ENCODE measurements at regions of chr10 and their contacts with region 1.

Region 1: DNA sequence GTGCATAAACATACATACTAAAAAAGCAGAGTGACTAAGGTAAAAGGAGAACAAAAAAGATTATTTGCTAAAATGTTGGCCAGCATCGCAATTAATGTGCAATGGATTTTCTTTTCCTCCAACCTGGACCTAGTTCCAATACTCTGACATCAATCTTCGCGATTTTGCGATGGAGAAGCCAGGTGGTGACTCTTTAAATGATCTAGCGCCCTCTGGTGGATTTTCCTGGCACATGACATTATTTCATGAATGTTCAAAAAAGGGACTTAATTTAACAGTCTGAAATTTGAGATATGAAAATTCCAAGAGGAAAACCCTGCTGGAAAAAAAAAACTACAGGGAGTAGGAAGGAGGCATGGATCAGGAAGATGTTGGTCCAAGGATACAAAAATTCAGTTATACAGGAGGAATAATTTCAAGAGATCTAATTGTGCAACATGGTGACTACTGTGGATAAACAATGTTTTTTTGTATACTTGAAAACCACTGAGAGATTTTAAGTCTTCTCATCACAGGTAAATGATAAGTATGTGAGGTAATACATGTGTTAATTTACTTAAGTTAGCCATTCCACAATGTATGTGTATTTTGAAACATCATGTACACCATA is 4.3 kb upstream of the KCNMA1 start:
- DNase-seq: peak; percentile 100
- ATAC-seq: peak; percentile 13
- H3K4me3 ChIP-seq: no peak overlapping the region
- H3K27ac ChIP-seq: peak overlapping the region; percentile 2
- H3K4me1 ChIP-seq: peaks cover 35% of the 10 kb centered on the region
- H3K27me3 ChIP-seq: no peaks in the 10 kb centered on the region
- CTCF ChIP-seq: peak; percentile 100

Region 2: GRCh38 chr10:77173615-77174461 is 468.1 kb before region 1 on chr10:
- CTCF ChIA-PET with region 1: interaction called, 36 read pairs
- POLR2A ChIA-PET with region 1: no interaction called
- intact Hi-C with region 1: loop called (anchors 1 kb)
- DNase-seq: peak; percentile 100
- ATAC-seq: peak; percentile 78
- H3K4me3 ChIP-seq: no peak overlapping the region
- H3K27ac ChIP-seq: no peak overlapping the region
- H3K4me1 ChIP-seq: peaks cover 16% of the 10 kb centered on the region
- H3K27me3 ChIP-seq: no peaks in the 10 kb centered on the region
- CTCF ChIP-seq: peak; percentile 100

Region 3: GRCh38 chr10:77301305-77301730 is 340.6 kb before region 1 on chr10:
- CTCF ChIA-PET with region 1: interaction called, 3 read pairs
- POLR2A ChIA-PET with region 1: interaction called, 3 read pairs
- intact Hi-C with region 1: loop called (anchors 5 kb)
- DNase-seq: peak; percentile 96
- ATAC-seq: 0 out of 2 replicates have a peak, but pooled peaks have one; percentile 1
- H3K4me3 ChIP-seq: no peak overlapping the region
- H3K27ac ChIP-seq: no peak overlapping the region
- H3K4me1 ChIP-seq: peaks cover 34% of the 10 kb centered on the region
- H3K27me3 ChIP-seq: no peaks in the 10 kb centered on the region
- CTCF ChIP-seq: no peak

Region 4: DNA sequence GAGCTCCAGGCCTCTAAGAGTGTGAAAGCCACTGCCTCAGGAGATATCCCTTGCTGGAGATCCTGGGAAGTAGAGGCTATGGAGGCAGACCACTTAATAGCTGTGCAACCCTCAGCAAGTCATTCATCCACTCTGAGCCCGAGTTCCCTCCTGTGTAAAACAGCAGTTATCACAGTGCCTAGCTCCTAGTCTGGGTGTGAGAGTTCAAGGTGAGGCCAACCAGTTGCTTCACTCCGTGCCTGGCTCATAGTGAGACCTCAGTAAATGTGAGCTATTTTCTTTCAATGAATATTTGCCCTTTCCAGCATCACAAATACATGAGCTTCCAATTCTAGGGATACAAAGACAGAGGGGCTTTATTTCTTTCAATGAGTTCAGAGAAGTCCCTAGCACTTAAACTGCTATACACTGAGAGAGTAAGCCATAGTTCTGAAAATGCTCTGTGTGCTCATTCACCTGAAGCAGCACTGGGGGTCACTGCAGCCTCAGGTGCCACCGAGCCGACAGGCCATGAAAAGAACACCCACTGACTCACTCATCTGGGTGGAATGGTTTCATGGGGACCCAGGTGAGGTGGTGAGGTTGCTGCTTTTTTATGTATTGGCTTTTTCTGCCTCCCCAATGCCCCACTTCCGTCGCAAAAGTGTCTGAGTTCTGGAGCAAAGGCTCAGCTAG is 264.1 kb before region 1 on chr10:
- CTCF ChIA-PET with region 1: no interaction called
- POLR2A ChIA-PET with region 1: no interaction called
- intact Hi-C with region 1: no loop called
- DNase-seq: peak; percentile 44
- ATAC-seq: peak; percentile 30; the same call in 1 of the 2 replicates
- H3K4me3 ChIP-seq: no peak overlapping the region
- H3K27ac ChIP-seq: no peak overlapping the region
- H3K4me1 ChIP-seq: peaks cover under 1% of the 10 kb centered on the region; the same call in 1 of the 2 replicates
- H3K27me3 ChIP-seq: no peaks in the 10 kb centered on the region
- CTCF ChIP-seq: peak; percentile 53; the same call in 1 of the 2 replicates

Region 5: GRCh38 chr10:77416311-77417135 is 225.4 kb before region 1 on chr10:
- CTCF ChIA-PET with region 1: no interaction called
- POLR2A ChIA-PET with region 1: no interaction called
- intact Hi-C with region 1: loop called (anchors 1 kb)
- DNase-seq: peak; percentile 100
- ATAC-seq: peak; percentile 94
- H3K4me3 ChIP-seq: peak overlapping the region; percentile 3; the same call in 1 of the 2 replicates
- H3K27ac ChIP-seq: peak overlapping the region; percentile 76
- H3K4me1 ChIP-seq: peaks cover 37% of the 10 kb centered on the region
- H3K27me3 ChIP-seq: no peaks in the 10 kb centered on the region
- CTCF ChIP-seq: no peak

Region 6: GRCh38 chr10:77494327-77494726 is 147.6 kb before region 1 on chr10:
- CTCF ChIA-PET with region 1: interaction called, 4 read pairs
- POLR2A ChIA-PET with region 1: no interaction called
- intact Hi-C with region 1: loop called (anchors 1 kb)
- DNase-seq: peak; percentile 86
- ATAC-seq: peak; percentile 61
- H3K4me3 ChIP-seq: no peak overlapping the region
- H3K27ac ChIP-seq: no peak overlapping the region
- H3K4me1 ChIP-seq: no peaks in the 10 kb centered on the region
- H3K27me3 ChIP-seq: no peaks in the 10 kb centered on the region
- CTCF ChIP-seq: peak; percentile 96

Region 7: DNA sequence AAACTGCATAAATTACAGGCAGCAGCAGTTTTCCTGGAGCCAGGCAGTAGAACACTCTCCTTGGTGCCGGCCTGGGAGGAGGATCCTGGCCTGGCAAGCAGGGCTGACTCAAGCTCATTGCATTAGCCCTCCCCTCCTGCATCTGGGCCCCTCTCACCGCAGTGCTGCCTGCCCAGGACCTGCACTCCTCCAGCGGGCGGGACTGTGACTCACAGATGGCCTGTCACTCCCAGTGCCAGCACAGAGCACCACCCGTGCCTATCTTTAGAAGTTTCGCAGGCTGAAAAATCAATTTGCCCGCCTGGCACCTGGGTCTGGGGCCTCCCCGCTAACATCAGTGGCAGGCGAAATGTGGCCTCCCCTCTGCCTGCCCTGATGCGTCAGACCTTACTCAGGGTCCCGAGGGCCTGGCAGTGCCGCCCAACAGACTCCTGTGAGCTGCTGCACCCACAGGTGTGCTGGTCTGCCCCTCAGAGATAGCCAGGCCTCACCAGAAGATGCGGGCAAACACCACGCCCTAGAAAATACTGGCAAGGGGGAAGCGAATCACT is 128.0 kb before region 1 on chr10:
- CTCF ChIA-PET with region 1: interaction called, 18 read pairs
- POLR2A ChIA-PET with region 1: no interaction called
- intact Hi-C with region 1: no loop called
- DNase-seq: peak; percentile 100
- ATAC-seq: peak; percentile 91
- H3K4me3 ChIP-seq: peak overlapping the region; percentile 49
- H3K27ac ChIP-seq: peak overlapping the region; percentile 82
- H3K4me1 ChIP-seq: peaks cover 69% of the 10 kb centered on the region
- H3K27me3 ChIP-seq: no peaks in the 10 kb centered on the region
- CTCF ChIP-seq: no peak

Region 8: GRCh38 chr10:77710759-77711682 is 69.1 kb after region 1 on chr10:
- CTCF ChIA-PET with region 1: interaction called, 15 read pairs
- POLR2A ChIA-PET with region 1: no interaction called
- intact Hi-C with region 1: loop called (anchors 1 kb)
- DNase-seq: peak; percentile 97
- ATAC-seq: peak; percentile 98
- H3K4me3 ChIP-seq: peak overlapping the region; percentile 57
- H3K27ac ChIP-seq: no peak overlapping the region
- H3K4me1 ChIP-seq: peaks cover 10% of the 10 kb centered on the region; the same call in 1 of the 2 replicates
- H3K27me3 ChIP-seq: no peaks in the 10 kb centered on the region
- CTCF ChIP-seq: peak; percentile 100